ENCODE measurements at regions of chr11 and their contacts with region 1.

Region 1: DNA sequence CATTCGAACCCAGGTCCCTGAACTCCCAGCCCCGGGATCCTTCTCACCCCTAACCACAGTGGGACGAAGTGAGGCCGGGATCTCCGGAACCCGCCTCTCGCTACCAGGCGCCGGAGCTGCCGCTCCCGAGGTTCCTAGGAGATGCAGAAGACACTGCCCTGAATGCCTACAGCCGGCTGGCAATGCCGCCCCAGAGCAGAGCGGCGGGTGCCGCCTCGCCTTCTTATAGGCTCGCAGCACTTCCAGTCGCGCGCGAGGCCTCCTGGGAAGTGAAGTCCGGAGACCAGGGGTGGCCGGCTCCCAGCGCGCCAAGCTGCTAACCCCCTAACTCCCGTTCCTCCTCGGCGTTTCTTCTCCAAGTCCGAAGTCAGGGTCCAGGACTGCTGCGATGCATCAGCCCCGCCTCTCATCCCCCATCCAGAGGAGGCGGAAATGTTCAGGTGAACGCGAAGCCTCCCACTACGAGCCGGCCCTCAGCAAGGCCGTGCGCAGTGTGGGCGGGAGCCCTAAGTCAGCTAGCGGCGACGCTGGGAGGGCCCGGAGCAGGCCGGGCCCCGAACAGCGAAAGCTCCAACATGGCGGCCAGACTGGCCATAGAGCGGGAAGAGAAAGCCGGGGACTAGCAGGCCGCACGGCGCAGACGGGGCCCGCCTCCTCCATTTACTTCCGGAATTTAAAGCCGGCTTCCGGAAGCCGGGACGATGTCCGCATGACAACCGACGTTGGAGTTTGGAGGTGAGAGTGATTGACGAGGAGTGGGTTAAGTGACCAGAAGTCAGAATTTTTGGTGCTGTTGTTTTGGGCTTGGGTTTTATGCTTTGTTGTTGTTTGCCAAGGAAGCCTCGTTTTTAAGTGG is at the starts of genes CYB561A3 and TMEM138:
- DNase-seq: peak; percentile 92 to 95 (median 92)
- H3K4me3 ChIP-seq: peak within 1 kb of the TSS; percentile 65 to 89 (median 79)
- H3K4me3 Mint-ChIP-seq: peak within 1 kb of the TSS; percentile 97 to 100
- H3K27ac ChIP-seq: peak within 1 kb of the TSS; percentile 97 to 99
- H3K27ac Mint-ChIP-seq: peak within 1 kb of the TSS; percentile 97 to 100 (median 100)
- H3K4me1 ChIP-seq: peaks cover 60 to 65% of the 10 kb centered on the region in 2 donors
- H3K4me1 Mint-ChIP-seq: peaks cover 57% of the 10 kb centered on the region
- H3K27me3 ChIP-seq: no peaks in the 10 kb centered on the region
- H3K27me3 Mint-ChIP-seq: no peaks in the 10 kb centered on the region
- CTCF ChIP-seq: no peak
- polyA plus RNA-seq, gene CYB561A3: 79.7 to 112 (median 112) TPM
- polyA plus RNA-seq, gene TMEM138: 34.5 to 64.0 (median 50.7) TPM

Region 2: DNA sequence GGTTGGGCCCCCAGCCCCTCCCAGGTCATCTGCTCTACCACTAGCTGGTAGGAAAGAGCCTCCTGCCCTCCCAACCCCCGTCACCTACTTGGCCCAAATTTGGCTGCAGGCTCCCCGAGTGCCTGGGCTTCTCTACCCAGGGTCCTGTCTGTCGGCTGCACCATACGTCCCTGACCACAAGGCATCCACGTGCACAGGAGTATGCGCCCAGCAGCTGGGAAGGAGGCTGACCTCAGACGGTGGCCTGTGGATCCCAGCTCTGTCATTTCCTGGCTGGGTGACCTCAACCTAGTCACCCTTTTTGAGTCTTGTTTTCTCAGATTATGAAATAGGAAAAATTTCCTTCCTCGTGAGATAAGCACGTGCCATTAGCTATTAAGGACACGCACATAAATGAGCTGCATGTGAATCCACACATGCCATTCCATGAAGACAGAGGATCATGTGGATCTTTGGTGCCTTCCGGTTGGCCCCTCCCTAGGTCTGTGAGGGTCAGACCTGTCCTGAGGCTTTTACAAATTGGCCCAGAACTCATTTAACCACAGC is 13.9 kb before region 1 on chr11:
- intact Hi-C with region 1: loop called in 1 of 2 experiments (anchors 1 kb)
- DNase-seq: peak; percentile 95 to 99 (median 96)
- H3K4me3 ChIP-seq: no peak overlapping the region
- H3K4me3 Mint-ChIP-seq: peak overlapping the region in 1 of 2 donors; percentile 31
- H3K27ac ChIP-seq: peak overlapping the region; percentile 83 to 93
- H3K27ac Mint-ChIP-seq: peak overlapping the region; percentile 95 to 99 (median 98)
- H3K4me1 ChIP-seq: peaks cover 23 to 29% of the 10 kb centered on the region in 2 donors
- H3K4me1 Mint-ChIP-seq: peaks cover 34% of the 10 kb centered on the region
- H3K27me3 ChIP-seq: no peaks in the 10 kb centered on the region
- H3K27me3 Mint-ChIP-seq: no peaks in the 10 kb centered on the region
- CTCF ChIP-seq: no peak

Region 3: DNA sequence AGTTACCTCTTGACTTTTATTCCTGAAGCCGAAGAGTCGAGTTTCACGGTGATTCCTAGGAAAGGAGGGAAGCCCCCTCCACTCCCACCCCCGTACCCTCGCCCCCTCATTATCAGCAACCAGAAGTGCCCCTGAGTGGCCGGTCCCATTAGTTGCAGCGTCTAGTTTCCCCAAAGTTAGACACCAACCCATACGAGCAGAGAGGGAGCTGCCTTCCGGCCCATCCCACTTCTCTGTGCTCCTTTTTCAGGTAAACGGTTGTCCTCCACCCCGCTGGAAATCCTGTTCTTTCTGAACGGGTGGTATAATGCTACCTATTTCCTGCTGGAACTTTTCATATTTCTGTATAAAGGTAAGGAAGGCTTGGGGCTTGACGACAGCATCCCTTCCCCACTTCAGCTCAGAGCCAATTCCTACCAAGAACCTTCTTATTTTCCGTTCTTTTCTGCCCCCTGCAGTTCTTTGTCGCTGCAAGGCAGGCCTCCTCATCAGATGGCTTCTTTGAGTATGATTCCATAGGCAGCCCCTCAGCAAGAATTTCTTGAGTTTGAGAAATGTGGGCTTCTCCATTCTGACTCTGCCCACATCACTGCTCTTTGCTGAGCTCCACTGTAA is 31.2 kb after region 1 on chr11:
- intact Hi-C with region 1: loop called in 1 of 2 experiments (anchors 2 kb)
- DNase-seq: no peak
- H3K4me3 ChIP-seq: peak overlapping the region; percentile 90 to 94 (median 90)
- H3K4me3 Mint-ChIP-seq: peak overlapping the region; percentile 96 to 97
- H3K27ac ChIP-seq: peak overlapping the region; percentile 67 to 88
- H3K27ac Mint-ChIP-seq: peak overlapping the region; percentile 87 to 96 (median 93)
- H3K4me1 ChIP-seq: peaks cover 17 to 19% of the 10 kb centered on the region in 2 donors
- H3K4me1 Mint-ChIP-seq: peaks cover 18% of the 10 kb centered on the region
- H3K27me3 ChIP-seq: no peaks in the 10 kb centered on the region
- H3K27me3 Mint-ChIP-seq: no peaks in the 10 kb centered on the region
- CTCF ChIP-seq: no peak

Measured in CD14-positive monocyte (primary cell).